WTC11 (cell line): ENCODE measurements at regions of chr11 and their contacts with region 1.

Region 1: GRCh38 chr11:72724851-72725730 is 27.1 kb downstream of the ARAP1 start:
- DNase-seq: peak; percentile 79
- ATAC-seq: peak; percentile 63
- H3K4me3 Mint-ChIP-seq: no peak overlapping the region
- H3K27ac Mint-ChIP-seq: peak overlapping the region; percentile 55; the same call in 1 of the 2 replicates
- H3K4me1 Mint-ChIP-seq: peaks cover 12% of the 10 kb centered on the region
- H3K27me3 Mint-ChIP-seq: no peaks in the 10 kb centered on the region
- CTCF ChIP-seq: peak; percentile 84

Region 2: DNA sequence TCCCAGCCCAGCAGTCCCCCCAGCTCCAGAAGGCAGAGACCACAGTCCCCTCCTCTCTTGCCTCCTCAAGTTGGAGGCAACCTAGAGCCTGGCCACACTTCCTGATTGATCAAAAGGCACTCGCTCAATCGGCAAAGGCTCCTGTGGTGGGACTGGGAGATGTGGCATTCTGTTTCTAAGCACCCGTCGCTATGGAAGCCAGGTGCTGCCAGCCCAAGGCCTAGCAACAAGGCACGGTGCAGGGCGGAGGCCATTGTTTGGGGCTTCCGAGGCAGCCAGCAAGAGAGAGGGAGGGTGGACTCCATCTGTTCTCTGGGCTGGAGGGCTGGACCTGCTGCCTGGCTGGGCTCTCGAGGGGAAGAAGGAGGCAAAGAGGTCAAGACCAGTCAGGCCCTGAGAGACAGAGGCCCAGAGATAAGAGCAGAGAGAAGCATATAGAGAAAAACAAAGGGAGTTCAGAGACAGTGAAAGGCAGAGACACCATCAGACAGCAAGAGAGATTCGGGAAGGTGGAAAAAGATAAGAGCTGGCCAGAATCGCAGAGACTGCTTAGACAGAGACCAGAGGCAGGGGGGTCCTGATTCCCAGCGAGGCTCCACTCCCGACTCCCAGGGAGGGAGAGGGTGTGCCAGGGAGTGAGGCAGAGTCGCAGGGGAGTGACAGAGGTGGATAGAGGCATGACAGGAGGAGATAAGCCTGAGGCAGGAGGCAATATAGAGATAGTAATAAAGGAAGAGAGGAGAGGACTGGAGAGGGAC is 72.0 kb before region 1 on chr11:
- CTCF ChIA-PET with region 1: no interaction called
- POLR2A ChIA-PET with region 1: no interaction called
- DNase-seq: peak; percentile 78
- ATAC-seq: peak; percentile 94
- H3K4me3 Mint-ChIP-seq: no peak overlapping the region
- H3K27ac Mint-ChIP-seq: 0 out of 2 replicates have a peak overlapping the region, but pooled peaks have one; percentile 1
- H3K4me1 Mint-ChIP-seq: peaks cover 13% of the 10 kb centered on the region
- H3K27me3 Mint-ChIP-seq: peaks cover 8% of the 10 kb centered on the region
- CTCF ChIP-seq: no peak

Region 3: DNA sequence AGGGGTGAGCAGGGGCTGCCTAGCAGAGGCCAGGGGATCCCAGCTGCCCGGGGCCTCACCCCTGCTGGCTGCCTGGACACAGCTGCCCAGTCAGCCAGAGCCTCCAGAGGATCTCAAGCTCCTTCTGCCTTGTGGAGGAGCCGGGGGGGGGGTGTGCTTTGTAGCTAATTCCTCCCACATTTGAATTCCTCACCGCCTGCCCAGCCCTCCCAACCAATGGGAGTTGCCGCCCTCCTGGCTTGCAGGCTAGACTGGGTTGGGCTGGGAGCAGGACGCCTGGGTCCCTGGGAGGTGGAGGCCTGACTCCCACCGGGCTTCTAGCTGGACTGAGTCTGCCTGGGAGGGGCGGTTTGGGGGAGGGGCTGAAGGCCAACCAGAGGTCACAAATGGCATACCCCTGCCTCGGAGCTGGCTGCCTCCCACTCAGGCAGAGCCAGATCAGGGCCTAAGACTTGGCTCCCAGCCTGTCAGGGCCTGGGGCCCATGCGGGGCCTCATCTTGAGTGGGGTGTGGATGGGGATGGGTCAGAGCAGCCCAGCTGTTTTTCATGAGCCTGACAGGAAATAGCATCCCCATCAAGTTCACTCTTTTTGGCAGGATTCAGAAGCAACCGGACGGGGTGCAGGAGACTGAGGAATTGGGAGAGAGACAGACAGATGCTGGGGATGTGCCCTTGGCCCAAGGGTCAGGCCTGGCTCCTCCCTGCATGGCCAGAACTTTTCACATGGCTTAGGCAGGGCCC is 21.7 kb before region 1 on chr11:
- CTCF ChIA-PET with region 1: interaction called, 11 read pairs
- POLR2A ChIA-PET with region 1: no interaction called
- DNase-seq: no peak
- ATAC-seq: no peak
- H3K4me3 Mint-ChIP-seq: no peak overlapping the region
- H3K27ac Mint-ChIP-seq: no peak overlapping the region
- H3K4me1 Mint-ChIP-seq: peaks cover 42% of the 10 kb centered on the region
- H3K27me3 Mint-ChIP-seq: no peaks in the 10 kb centered on the region
- CTCF ChIP-seq: no peak

Region 4: DNA sequence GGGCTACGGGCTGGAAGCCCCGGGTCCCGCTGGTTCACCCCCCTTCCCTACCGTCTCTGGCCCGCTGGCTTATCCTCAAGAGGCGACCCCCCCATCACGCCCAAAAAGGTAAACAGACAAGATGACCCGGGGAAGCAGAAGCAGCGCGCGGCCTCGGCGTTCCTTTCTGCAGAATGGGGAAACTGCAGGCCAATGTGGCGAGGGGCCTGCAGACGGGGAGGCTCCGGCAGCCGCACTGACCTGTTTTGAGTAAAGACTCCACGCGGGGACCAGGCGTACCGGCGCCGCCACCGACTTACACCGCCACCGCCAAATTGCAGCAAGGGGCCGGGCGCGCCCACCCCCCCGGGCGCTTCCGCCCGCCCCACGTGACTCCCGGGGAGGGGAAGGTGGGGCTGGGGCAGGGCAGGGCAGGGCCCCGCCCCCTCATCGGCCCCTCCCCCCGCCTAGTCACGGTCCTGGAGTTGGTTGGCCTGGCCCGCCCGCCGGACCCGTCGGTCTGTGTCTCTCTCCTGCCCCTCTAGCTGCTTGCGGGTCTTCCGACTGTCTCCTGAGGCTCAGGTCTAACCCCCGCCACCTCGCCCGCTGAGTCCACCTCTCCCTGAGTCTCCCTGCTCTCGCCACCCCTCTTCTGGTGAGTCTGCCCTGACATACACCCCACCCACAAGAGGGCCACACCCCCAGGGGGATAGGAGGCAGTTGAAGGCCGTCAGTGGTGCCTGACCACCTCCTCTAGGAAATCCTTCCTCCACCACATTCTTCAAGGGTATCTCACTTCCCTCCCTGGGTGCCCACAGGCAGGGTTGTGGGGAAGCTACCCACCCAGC is 27.2 kb after region 1 on chr11 and contains the start of gene ARAP1:
- CTCF ChIA-PET with region 1: interaction called, 11 read pairs
- POLR2A ChIA-PET with region 1: no interaction called
- DNase-seq: peak; percentile 76
- ATAC-seq: peak; percentile 76
- H3K4me3 Mint-ChIP-seq: peak within 1 kb of the TSS; percentile 93
- H3K27ac Mint-ChIP-seq: peak within 1 kb of the TSS; percentile 96
- H3K4me1 Mint-ChIP-seq: peaks cover 40% of the 10 kb centered on the region
- H3K27me3 Mint-ChIP-seq: peaks cover 10% of the 10 kb centered on the region
- CTCF ChIP-seq: no peak
- total RNA-seq, gene ARAP1: 76.4 to 98.8 TPM (median 78.3 TPM) in 3 replicates

Region 5: GRCh38 chr11:72787216-72788104 is 62.4 kb after region 1 on chr11:
- CTCF ChIA-PET with region 1: interaction called, 81 read pairs
- POLR2A ChIA-PET with region 1: interaction called, 5 read pairs
- DNase-seq: peak; percentile 88
- ATAC-seq: peak; percentile 92
- H3K4me3 Mint-ChIP-seq: peak overlapping the region; percentile 40; the same call in 1 of the 2 replicates
- H3K27ac Mint-ChIP-seq: peak overlapping the region; percentile 84; the same call in 1 of the 2 replicates
- H3K4me1 Mint-ChIP-seq: peaks cover 26% of the 10 kb centered on the region
- H3K27me3 Mint-ChIP-seq: peaks cover under 1% of the 10 kb centered on the region; the same call in 1 of the 2 replicates
- CTCF ChIP-seq: no peak

Region 6: GRCh38 chr11:72799441-72799840 is 74.3 kb after region 1 on chr11:
- CTCF ChIA-PET with region 1: interaction called, 81 read pairs
- POLR2A ChIA-PET with region 1: no interaction called
- DNase-seq: no peak
- ATAC-seq: no peak
- H3K4me3 Mint-ChIP-seq: no peak overlapping the region
- H3K27ac Mint-ChIP-seq: no peak overlapping the region
- H3K4me1 Mint-ChIP-seq: peaks cover 18% of the 10 kb centered on the region
- H3K27me3 Mint-ChIP-seq: no peaks in the 10 kb centered on the region
- CTCF ChIP-seq: no peak

Region 7: GRCh38 chr11:72821883-72822799 is 97.0 kb after region 1 on chr11:
- CTCF ChIA-PET with region 1: interaction called, 22 read pairs
- POLR2A ChIA-PET with region 1: no interaction called
- DNase-seq: peak; percentile 96
- ATAC-seq: peak; percentile 84
- H3K4me3 Mint-ChIP-seq: peak overlapping the region; percentile 61
- H3K27ac Mint-ChIP-seq: no peak overlapping the region
- H3K4me1 Mint-ChIP-seq: peaks cover 17% of the 10 kb centered on the region
- H3K27me3 Mint-ChIP-seq: peaks cover 36% of the 10 kb centered on the region
- CTCF ChIP-seq: no peak

Region 8: GRCh38 chr11:72951193-72951592 is 226.1 kb after region 1 on chr11:
- CTCF ChIA-PET with region 1: no interaction called
- POLR2A ChIA-PET with region 1: no interaction called
- DNase-seq: no peak
- ATAC-seq: no peak
- H3K4me3 Mint-ChIP-seq: no peak overlapping the region
- H3K27ac Mint-ChIP-seq: no peak overlapping the region
- H3K4me1 Mint-ChIP-seq: peaks cover 16% of the 10 kb centered on the region
- H3K27me3 Mint-ChIP-seq: no peaks in the 10 kb centered on the region
- CTCF ChIP-seq: no peak